Activated CD4-positive, alpha-beta memory T cell treated with anti-CD3 and anti-CD28 coated beads, Interleukin-2, amount 10 ng/mL, durations not matched to agents 7 days and 5 days (primary cell): ENCODE measurements at regions of chr18 and their contacts with region 1.

Region 1: DNA sequence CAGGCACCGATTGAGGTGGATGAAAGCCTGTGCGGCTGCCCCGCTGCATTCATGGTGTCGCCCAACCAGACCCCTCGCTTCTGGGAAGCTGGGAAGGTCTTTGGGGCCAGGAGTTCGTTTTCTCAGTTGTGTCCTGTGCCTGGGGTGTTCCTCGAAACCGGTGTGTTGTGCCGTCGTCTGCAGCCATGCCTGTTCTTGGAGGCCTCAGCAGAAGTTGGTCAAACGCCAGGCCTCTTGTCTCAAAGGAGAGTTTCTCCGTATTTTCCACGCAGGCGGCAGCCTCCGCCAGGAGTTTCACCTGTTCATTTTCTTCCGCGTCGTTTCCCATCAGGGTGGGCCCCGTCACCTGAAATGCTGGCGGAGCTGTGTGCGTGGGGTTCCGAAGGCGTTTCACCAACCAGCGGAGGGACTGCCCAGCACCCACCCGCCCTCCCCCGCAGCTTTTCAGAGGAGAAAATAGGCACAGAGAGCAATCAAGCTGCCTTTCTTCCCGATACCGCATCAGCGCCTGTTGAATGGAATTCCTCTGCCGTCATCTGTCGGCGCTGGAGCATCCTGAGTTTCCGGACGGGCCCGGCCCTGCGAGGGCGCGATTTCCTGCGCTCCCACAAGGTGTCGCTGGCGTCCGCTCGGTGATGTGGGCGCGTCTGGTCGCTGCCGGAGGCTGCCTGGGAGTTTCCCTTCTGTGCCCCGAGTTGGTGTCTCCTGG is 17.0 kb upstream of the NFATC1 start:
- DNase-seq: peak; percentile 83
- H3K4me3 Mint-ChIP-seq: no peak overlapping the region
- H3K27ac Mint-ChIP-seq: no peak overlapping the region
- H3K4me1 Mint-ChIP-seq: peaks cover 14% of the 10 kb centered on the region
- H3K27me3 Mint-ChIP-seq: no peaks in the 10 kb centered on the region

Region 2: GRCh38 chr18:79439201-79440023 is 60.7 kb after region 1 on chr18:
- CTCF ChIA-PET with region 1: no interaction called
- POLR2A ChIA-PET with region 1: no interaction called
- DNase-seq: no peak
- H3K4me3 Mint-ChIP-seq: no peak overlapping the region
- H3K27ac Mint-ChIP-seq: no peak overlapping the region
- H3K4me1 Mint-ChIP-seq: peaks cover 17% of the 10 kb centered on the region
- H3K27me3 Mint-ChIP-seq: no peaks in the 10 kb centered on the region

Region 3: GRCh38 chr18:79528846-79529245 is 150.2 kb after region 1 on chr18:
- CTCF ChIA-PET with region 1: interaction called, 44 read pairs
- POLR2A ChIA-PET with region 1: interaction called, 3 read pairs
- DNase-seq: peak; percentile 71
- H3K4me3 Mint-ChIP-seq: no peak overlapping the region
- H3K27ac Mint-ChIP-seq: no peak overlapping the region
- H3K4me1 Mint-ChIP-seq: peaks cover 13% of the 10 kb centered on the region
- H3K27me3 Mint-ChIP-seq: no peaks in the 10 kb centered on the region

Region 4: DNA sequence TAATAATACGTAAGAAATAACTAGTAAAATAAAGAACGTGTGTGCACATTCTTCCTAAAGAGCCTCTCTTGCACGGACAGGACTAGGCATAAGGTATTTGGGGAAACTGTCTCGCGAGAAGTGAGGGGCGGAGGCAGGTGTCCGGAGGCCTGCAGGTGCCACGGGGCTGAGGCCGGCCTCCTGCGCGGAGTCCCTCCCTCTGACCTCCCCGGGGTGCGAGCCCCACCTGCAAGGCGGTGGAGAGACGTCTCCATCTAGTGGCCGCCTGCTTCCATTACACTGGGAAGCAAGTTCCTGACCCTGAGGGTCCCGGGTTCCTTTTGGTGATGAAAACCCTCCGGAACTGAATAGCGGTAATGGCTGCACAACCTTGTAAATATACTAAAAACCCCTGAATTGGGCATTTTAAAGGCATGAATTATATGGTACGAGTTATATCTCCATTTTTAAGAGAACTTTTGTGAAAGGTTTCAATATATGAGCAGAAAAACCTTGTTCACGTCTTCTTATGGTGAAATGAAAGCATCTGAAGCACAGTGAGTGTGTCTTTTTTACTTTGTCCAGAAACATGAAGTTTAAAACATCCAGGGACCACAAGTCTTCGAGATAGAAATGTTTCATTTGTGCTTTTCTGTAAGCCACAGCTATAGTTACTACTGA is 265.4 kb after region 1 on chr18:
- CTCF ChIA-PET with region 1: interaction called, 31 read pairs
- POLR2A ChIA-PET with region 1: no interaction called
- DNase-seq: peak; percentile 67
- H3K4me3 Mint-ChIP-seq: no peak overlapping the region
- H3K27ac Mint-ChIP-seq: no peak overlapping the region
- H3K4me1 Mint-ChIP-seq: peaks cover 3% of the 10 kb centered on the region
- H3K27me3 Mint-ChIP-seq: peaks cover under 1% of the 10 kb centered on the region